GM13976 (cell line): ENCODE measurements at regions of chr11 and their contacts with region 1.

Region 1: GRCh38 chr11:35412285-35412684 is 7.1 kb downstream of the SLC1A2 start:
- DNase-seq: no peak
- CTCF ChIP-seq: peak; percentile 28

Region 2: DNA sequence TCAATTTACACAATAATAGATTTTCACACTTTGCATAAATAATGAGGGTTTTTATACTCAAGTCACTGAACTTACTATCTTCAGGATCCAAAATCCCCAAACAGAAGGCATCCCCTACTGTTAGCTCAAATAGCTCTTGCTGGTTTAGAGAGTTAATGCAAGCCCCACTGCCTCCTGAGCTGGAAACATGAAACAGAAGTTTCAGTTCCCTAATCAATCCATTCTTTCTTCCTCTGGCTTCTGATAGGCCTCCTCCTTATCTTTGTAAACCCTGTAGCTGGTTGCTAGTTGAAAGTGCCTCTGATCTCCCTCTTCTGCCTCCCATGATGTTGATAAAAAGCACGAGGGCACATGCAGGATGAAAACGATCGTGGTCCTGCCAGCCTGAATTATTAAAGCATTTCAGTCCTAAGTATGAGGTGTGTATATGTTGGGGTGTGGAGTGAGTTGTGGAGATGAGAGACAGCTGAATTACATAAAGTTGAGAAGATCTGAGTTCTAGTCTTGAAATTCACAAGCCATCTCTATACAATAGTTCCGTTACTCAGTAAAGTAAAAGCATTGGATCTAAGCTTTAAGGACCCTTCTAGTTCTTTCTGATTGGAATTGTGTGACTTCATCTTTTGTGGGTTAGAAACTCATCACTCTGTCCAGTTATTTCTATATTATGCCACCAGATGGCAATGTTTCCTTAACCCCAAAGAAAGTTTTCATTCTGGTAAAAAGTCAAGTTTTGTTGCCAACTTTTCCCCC is 826.4 kb before region 1 on chr11:
- in situ Hi-C with region 1: loop called (anchors 10 kb)
- DNase-seq: peak; percentile 46
- CTCF ChIP-seq: peak; percentile 55

Region 3: GRCh38 chr11:35192347-35192746 is 219.9 kb before region 1 on chr11:
- in situ Hi-C with region 1: no loop called
- DNase-seq: no peak
- CTCF ChIP-seq: no peak

Region 4: DNA sequence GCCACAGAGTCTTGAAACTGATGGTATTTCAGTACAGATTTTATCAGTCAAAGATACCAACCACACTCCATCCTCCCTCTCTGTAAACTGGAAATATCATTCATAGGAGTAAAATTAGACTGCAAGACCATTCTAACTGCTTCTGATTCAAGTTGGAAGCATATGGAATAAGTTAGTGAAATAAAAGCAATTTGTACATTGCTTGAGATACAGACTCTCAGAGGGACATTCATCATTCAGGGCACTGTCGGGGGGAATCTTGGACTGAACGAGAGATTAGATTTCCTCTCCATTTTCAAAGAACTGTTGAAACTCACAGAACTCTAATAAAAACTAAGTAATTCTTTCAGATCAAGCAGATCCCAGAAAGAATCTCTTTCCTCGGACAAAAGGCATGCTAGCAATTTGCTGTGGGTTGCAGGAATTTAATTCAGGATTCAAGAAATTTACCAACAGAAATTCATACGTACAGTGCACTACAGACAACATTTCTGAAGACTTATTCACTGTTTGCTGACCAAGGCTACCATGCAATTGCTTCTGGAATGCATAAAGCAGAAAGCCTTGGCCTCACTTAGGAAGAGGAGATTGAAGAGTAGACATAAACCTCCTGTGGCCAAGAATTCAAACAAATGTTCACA is 79.1 kb after region 1 on chr11:
- in situ Hi-C with region 1: no loop called
- DNase-seq: no peak
- CTCF ChIP-seq: no peak

Region 5: DNA sequence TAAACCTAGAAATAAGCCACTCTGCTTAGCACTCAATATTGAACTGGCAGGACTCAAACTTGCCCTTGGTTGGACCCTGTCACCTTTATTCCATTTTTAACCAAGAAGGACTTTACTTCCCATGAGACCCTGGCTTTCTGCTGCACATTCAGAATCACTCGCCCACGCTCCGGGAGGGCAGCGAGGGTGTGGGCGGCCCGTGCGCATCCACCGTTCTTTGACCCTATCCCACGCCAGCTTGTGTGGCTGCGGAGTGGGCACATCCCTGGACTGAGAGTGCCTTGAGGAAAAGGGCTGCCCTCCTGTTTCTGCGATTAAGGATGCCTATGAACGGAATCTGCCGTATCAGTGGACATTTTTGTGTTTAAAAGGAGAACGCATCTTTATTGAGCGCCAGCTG is 289.8 kb after region 1 on chr11:
- in situ Hi-C with region 1: no loop called
- DNase-seq: no peak
- CTCF ChIP-seq: no peak